GM10248 (cell line): ENCODE measurements at regions of chr16 and their contacts with region 1.

Region 1: DNA sequence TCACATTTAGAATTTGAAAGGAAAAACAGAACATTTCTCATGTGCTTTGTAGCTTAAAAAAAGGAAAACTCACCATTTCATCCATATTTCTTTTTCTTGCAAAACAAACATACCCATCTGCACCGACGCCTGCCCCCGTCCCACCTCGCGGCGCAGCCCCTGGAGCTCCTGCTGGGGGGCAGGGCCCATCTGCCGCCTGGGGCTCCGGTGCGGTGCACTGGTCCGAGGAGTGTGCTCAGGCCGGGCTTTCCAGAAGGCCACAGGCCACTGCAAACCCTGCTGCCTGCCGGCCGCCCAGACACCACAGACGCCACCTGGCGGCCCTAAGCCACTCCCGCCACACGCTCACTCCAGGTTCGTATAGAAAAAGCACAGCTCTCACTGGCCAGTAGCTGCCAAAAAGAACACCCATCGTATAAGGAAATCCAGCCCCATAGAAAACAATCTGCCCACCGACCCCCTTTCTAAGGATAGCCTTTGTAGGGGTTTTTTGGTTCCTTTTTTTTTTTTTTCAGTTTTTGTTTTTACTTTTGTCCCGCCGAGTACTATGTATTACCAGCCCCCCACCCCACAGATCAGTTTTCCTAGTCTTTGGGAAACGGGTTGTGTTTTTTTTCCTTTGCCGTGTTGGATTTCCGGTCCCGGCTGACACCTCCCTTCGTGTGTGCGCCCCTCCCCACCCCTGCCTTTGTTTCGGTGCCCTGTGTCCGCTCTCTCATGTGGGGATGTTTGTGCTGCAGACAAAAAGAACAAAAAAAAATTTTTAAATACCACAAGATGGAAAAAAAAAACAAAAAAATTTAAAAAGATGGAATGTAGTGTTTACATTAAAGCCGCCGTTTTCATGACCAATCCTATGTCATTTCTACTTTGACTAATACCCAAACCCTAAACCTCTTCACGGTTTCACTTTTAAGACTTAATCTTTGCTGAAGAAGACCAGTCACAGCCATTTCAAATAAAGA is 68.8 kb downstream of the AMFR start:
- DNase-seq: peak; percentile 92
- CTCF ChIP-seq: peak; percentile 91

Region 2: DNA sequence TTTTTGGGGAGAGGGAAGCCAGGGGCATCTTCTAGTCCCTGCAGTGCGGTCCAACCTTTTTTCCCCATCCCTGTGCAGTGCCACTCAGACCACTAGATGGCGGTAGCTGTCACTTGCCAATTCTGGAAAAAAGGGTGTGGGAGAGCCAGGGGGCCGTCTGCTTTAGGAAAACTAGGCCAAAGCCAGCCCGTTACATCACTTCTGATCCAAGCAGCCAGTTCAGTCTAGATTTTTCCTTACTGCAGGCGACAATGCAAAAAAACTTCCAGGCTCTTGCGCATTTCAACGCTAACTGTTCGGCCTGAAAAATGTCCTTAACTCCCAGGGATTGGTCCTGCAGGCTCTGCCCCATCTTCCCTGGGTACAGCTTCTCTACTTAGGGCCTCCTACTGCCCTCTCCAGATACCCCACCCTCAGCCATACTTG is 412.2 kb before region 1 on chr16:
- CTCF ChIA-PET with region 1: interaction called, 11 read pairs
- POLR2A ChIA-PET with region 1: no interaction called
- DNase-seq: peak; percentile 31
- CTCF ChIP-seq: peak; percentile 90

Region 3: GRCh38 chr16:56332464-56333079 is 24.0 kb before region 1 on chr16:
- CTCF ChIA-PET with region 1: interaction called, 12 read pairs
- POLR2A ChIA-PET with region 1: no interaction called
- DNase-seq: peak; percentile 45
- CTCF ChIP-seq: peak; percentile 46

Region 4: DNA sequence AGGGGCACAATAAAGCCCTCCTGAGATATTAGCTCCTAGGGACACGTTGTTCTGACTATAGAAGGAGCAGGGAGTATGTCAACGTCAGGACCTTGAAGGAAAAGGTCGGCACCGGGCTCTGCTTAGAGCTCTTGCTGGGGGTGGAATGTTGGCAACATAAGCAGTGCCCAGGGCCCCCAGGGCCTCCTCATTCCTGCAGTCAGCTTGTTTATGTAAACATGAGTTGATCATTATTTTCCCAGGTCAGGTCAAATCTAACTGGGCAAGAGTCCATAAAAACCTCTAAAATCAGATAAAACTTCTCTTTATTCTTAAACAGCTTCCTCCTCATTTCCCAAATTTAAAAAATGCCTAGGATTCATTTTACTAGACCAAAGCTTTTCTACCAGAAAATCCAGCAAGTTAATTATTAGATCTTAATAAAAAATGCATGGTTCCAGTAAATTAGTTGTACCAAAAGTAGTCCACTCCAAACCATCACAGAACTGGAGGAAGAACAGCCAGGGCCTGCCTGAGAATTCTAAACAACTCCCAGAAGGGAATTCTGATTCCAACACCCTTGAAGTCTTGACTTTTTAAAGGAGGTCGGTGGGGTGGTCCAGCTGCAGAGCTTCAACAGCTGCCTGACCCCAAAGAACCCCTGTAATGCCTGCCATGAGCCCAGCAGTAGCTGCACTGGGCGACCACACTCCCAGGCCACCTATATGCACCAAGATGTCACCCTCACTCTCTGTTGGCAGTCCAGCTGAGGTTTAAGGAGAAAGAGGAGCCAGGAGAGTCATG is 14.5 kb after region 1 on chr16:
- CTCF ChIA-PET with region 1: interaction called, 10 read pairs
- POLR2A ChIA-PET with region 1: no interaction called
- DNase-seq: no peak
- CTCF ChIP-seq: no peak

Region 5: GRCh38 chr16:56409195-56409594 is 52.6 kb after region 1 on chr16:
- CTCF ChIA-PET with region 1: interaction called, 11 read pairs
- POLR2A ChIA-PET with region 1: no interaction called
- DNase-seq: no peak
- CTCF ChIP-seq: no peak